Astrocyte of the cerebellum (primary cell): ENCODE measurements at regions of chr6 and their contacts with region 1.

Region 1: DNA sequence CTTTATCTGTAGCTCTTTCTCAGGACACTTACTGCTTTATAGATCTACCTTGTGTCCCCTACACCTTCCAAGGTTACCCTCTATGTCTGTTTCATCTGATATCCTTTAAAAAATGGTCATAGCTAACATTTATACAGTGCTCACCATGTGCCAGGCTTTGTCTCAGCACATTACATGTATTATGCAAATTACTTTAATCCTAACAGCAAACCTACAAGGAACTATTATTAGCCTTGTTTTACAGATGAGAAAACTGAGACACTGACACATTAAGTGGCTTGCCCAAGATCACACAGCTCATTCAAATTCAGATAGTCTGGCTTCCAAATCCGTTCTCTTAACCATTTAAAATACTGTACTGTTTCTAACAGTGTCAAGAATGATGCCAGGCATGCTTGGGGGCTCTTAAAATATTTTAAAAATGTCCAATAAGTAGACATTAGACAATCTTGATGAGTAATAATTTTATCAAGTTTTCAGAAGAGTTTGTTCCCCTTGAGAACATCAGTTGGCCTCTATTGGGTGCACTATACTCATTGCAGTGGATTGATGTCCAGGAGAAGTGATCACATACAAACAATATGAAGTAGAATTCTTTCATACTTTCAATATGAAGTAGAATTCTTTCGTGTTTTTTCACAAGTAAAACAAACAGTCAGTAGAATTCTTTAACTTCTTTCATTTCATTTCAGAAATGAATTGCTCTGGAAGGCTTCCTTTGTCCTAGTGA is 69.6 kb downstream of the DNAH8 start:
- DNase-seq: no peak
- H3K4me3 ChIP-seq: no peak overlapping the region
- CTCF ChIP-seq: no peak

Region 2: DNA sequence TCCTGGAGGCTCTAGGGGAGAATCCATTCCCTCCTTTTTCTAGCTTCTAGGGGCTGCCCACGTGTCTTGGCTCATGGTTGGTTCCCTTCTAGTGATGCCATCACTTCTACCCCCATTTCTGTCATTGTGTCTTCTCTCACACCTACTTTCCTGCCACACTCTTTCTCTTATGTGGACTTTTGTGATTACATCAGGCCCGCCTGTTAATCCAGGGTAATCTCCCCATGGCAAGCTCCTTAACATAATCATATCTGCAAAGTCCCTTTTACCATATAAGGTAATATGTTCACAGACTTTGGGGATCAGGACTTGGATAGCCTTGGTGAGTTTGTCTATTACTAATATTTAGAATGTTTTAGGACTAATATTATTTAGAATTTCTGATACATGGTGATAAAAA is 42.4 kb after region 1 on chr6:
- in situ Hi-C with region 1: loop called (anchors 5 kb)
- DNase-seq: no peak
- H3K4me3 ChIP-seq: no peak overlapping the region
- CTCF ChIP-seq: no peak